ENCODE measurements at regions of chr15 and their contacts with region 1.

Region 1: GRCh38 chr15:99104788-99105513 is at the start of gene SYNM:
- DNase-seq: no peak
- H3K4me3 ChIP-seq: peak within 1 kb of the TSS; percentile 64
- CTCF ChIP-seq: peak; percentile 67

Region 2: GRCh38 chr15:99076552-99077308 is 28.2 kb before region 1 on chr15:
- CTCF ChIA-PET with region 1: interaction called, 19 read pairs
- POLR2A ChIA-PET with region 1: no interaction called
- DNase-seq: peak; percentile 28
- H3K4me3 ChIP-seq: peak overlapping the region; percentile 41
- CTCF ChIP-seq: peak; percentile 73

Region 3: DNA sequence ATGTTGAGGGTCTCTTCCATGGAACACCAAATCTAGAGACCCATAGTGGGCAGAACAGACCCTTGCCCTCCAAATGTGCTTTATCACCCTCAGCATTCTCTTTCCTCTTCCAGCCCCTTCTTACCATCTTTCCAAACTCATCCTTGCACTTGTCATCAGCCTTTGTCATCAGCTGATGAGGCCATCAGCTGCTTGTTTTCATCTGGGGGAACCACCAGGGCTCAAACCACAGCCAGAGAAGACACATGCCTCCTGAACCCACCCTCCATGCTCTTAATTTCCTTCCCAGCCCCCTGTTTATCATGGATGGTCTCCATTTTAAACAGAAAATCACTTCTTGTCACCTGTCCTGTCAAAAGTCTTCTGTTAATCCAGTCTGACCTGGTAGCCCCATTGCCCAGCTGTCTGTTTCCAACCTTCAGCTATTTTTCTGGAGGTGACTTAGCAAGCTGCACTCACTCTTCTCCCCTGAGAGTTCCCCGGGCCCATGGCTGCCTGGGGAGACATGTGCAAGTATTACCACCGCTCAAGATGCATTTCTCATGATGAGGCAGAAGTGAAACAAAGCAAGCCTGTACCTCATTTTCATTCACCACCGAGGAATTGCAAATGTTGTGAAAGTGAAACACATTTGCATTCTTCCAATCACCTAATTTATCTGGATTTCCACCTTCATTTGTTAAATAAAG is 14.8 kb before region 1 on chr15:
- CTCF ChIA-PET with region 1: interaction called, 116 read pairs
- POLR2A ChIA-PET with region 1: no interaction called
- DNase-seq: no peak
- H3K4me3 ChIP-seq: no peak overlapping the region
- CTCF ChIP-seq: no peak

Region 4: GRCh38 chr15:99169769-99170311 is 64.9 kb after region 1 on chr15:
- CTCF ChIA-PET with region 1: interaction called, 14 read pairs
- POLR2A ChIA-PET with region 1: no interaction called
- DNase-seq: peak; percentile 82
- H3K4me3 ChIP-seq: no peak overlapping the region
- CTCF ChIP-seq: no peak

Region 5: DNA sequence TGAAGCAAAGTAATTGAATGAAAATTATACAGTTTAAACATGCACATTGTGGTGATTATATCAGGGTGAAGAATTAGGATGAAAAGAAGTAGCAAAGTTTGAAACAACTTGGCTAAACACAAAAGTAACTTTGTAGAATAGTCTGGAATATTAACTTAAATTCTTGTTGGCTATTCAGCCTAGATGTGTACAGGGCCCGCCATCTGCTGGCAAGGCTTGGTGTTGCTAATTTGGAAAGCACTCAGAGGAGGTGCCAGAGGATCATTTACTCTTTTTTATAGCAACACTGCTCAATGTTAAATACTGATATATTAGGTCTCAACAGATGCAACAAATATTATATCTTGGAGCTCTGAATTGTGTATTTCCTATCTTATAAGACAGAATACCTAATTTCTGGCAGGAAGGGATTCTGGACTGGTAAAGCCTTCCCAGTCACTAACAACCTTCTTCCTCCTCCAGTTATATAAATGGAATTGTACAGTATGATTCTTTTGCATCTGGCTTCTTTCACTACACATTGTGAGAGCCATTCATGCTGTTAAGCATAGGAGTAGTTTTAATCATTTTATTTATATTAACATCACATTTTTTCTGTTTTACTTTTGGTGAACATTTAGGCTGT is 108.3 kb after region 1 on chr15:
- CTCF ChIA-PET with region 1: interaction called, 356 read pairs
- POLR2A ChIA-PET with region 1: no interaction called
- DNase-seq: peak; percentile 26
- H3K4me3 ChIP-seq: no peak overlapping the region
- CTCF ChIP-seq: peak; percentile 74

Region 6: DNA sequence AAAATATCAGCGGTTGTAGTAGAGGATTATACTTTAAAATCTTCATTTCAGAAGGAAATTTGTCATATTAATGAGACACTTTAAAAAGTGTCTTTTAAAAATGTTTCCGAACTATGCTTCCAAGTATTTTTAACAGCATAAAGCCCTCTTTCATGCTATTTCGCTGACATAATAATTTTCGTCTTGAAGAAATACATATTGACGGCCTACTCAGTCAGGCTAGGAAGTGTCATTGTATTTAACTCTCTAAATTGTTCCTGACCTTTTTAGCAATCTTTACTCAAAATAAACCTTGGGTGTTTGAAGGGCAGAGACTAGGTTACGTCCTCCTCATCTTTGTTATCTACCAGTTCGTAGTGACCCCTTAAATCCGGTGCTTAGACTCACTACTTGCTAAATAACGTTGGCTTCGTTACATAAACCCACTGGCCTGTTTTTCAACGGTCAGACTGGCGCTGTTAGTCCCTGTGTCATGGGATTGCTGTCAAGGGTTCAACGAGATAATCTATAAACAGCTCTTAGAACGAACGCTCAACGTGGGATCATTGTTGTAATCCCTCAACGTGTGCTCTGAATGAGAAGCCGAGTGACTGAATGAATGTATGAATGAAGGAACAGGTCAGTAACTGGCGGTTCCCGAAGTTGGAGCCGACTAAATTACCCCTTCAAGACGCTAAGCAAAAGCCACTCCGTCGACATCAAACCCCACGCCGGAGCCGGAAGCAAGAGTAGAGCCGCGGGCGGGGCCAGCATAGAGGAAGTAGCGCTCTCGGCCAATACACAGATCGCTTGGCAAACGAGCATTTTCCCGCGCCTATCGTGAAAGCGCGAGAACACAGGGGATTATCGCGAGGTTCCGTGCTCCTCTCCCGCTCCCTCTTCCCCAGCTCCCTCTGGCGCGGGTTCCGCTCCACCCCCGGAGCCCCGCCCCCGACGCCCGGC is 145.8 kb after region 1 on chr15:
- CTCF ChIA-PET with region 1: interaction called, 10 read pairs
- POLR2A ChIA-PET with region 1: interaction called, 3 read pairs
- DNase-seq: peak; percentile 88
- H3K4me3 ChIP-seq: peak overlapping the region; percentile 86
- CTCF ChIP-seq: no peak

Measured in AG04449 (cell line).